ENCODE measurements at regions of chr9 and their contacts with region 1.

Region 1: GRCh38 chr9:3240656-3241268 is 285.0 kb downstream of the RFX3 start:
- DNase-seq: peak; percentile 46
- H3K4me3 Mint-ChIP-seq: no peak overlapping the region
- H3K27ac Mint-ChIP-seq: no peak overlapping the region
- H3K4me1 Mint-ChIP-seq: peaks cover 5% of the 10 kb centered on the region
- H3K27me3 Mint-ChIP-seq: no peaks in the 10 kb centered on the region

Region 2: GRCh38 chr9:3191715-3192114 is 49.0 kb before region 1 on chr9:
- intact Hi-C with region 1: no loop called
- DNase-seq: no peak
- H3K4me3 Mint-ChIP-seq: no peak overlapping the region
- H3K27ac Mint-ChIP-seq: no peak overlapping the region
- H3K4me1 Mint-ChIP-seq: no peaks in the 10 kb centered on the region
- H3K27me3 Mint-ChIP-seq: peaks cover 10% of the 10 kb centered on the region

Region 3: GRCh38 chr9:3441197-3441816 is 200.5 kb after region 1 on chr9:
- intact Hi-C with region 1: loop called (anchors 1 kb)
- DNase-seq: peak; percentile 27
- H3K4me3 Mint-ChIP-seq: no peak overlapping the region
- H3K27ac Mint-ChIP-seq: no peak overlapping the region
- H3K4me1 Mint-ChIP-seq: peaks cover 3% of the 10 kb centered on the region
- H3K27me3 Mint-ChIP-seq: no peaks in the 10 kb centered on the region

Region 4: DNA sequence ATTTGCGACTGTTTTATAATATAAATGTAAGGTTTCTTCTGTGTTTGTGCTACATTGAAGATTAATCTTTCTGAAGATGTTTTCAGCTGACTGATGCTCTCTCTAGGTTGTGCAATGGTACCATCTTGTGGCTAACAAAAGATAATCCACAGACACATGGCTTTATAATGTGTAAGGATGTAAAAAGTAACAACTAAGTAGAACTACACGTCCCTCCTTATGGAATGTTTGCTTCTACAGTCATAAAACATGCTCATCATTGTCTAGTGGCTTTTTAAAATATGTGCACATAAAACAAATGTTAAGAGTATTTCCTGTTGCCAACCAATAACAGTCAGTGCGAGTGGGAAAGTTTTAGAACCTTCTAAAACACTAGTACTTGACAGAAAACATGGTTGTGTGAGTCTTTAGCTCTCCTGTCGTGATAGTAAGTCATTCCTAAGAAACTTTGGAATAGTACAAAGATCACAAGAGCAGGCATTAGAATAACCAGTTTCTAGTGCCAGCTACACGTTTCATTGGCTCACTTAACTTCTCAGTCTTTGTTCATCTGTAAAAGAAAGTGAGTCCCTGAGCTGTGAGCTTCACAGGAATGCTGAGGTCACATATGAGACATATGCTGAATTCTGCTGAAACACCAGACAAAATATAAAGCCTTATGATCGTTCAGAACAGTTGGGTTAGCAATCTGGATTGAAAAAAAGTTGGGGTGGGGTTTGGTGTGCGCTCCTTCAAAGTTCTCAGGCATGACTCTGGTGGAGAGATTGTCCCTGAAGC is 1134.8 kb after region 1 on chr9:
- intact Hi-C with region 1: loop called (anchors 10 kb)
- DNase-seq: no peak
- H3K4me3 Mint-ChIP-seq: no peak overlapping the region
- H3K27ac Mint-ChIP-seq: no peak overlapping the region
- H3K4me1 Mint-ChIP-seq: no peaks in the 10 kb centered on the region
- H3K27me3 Mint-ChIP-seq: peaks cover 22% of the 10 kb centered on the region

Measured in activated T-helper 2 cell treated with anti-CD3 and anti-CD28 coated beads, Interferon-gamma antibody, Interleukin-2, Interleukin-4, amounts not matched to agents 10 μg/mL and 5 μg/mL and 100 μg/mL, durations not matched to agents 14 hours and 24 hours and 36 hours (primary cell).